B cell (primary cell): ENCODE measurements at regions of chr2 and their contacts with region 1.

Region 1: GRCh38 chr2:64914735-64915509 is 74.3 kb upstream of the SLC1A4 start:
- DNase-seq: peak; percentile 80
- ATAC-seq: peak; percentile 79
- H3K4me3 ChIP-seq: no peak overlapping the region
- H3K4me3 Mint-ChIP-seq: peak overlapping the region; percentile 62
- H3K27ac ChIP-seq: peak overlapping the region in 1 of 2 donors; percentile 58
- H3K27ac Mint-ChIP-seq: peak overlapping the region; percentile 66
- H3K4me1 ChIP-seq: peaks cover 57 to 68% of the 10 kb centered on the region in 2 donors
- H3K4me1 Mint-ChIP-seq: peaks cover 59% of the 10 kb centered on the region
- H3K27me3 ChIP-seq: no peaks in the 10 kb centered on the region
- H3K27me3 Mint-ChIP-seq: no peaks in the 10 kb centered on the region
- CTCF ChIP-seq: no peak

Region 2: GRCh38 chr2:64426183-64426952 is 488.6 kb before region 1 on chr2:
- CTCF ChIA-PET with region 1: no interaction called
- POLR2A ChIA-PET with region 1: no interaction called
- intact Hi-C with region 1: no loop called
- DNase-seq: no peak
- ATAC-seq: no peak
- H3K4me3 ChIP-seq: no peak overlapping the region
- H3K4me3 Mint-ChIP-seq: no peak overlapping the region
- H3K27ac ChIP-seq: no peak overlapping the region
- H3K27ac Mint-ChIP-seq: no peak overlapping the region
- H3K4me1 ChIP-seq: no peaks in the 10 kb centered on the region
- H3K4me1 Mint-ChIP-seq: no peaks in the 10 kb centered on the region
- H3K27me3 ChIP-seq: no peaks in the 10 kb centered on the region
- H3K27me3 Mint-ChIP-seq: peaks cover 4% of the 10 kb centered on the region
- CTCF ChIP-seq: no peak

Region 3: DNA sequence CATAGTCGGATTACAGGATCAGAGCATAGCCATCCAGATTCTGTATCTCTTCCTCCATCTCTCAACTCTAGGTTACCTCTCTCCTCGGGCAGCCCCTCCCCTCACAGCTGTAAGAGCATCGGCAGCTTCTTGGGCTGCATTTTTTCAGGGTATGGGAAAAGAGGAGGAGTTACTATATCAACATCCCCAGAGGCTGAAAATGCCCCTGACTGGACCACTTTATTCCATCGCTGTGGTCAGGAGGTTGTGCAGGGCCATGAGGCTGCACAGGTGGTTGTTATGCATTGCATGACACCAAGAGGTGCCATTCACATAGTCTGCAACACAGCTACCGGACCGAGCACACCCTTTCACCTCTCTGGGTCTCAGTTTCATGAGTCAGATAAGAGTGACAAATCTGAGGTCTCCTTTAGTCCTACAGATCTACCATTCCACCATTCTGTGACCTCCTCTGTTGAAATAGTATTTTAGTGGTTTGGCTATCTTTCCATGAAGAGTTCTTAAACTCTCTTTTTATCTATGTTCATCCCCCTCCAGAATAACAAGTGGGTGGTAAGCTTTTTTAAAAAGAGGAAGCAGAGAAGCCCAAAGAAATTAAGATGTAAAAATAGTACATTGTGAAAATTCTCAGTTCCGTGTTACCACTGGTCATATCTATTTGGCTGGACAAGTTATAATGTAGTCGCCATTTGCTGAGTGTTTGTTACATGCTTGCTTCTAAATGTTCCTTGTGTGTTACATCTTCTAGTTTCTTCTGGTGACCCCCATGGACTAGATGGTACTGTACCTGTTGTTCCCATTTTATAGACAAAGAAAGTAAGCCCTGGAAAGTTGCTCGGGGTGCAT is 17.7 kb after region 1 on chr2:
- CTCF ChIA-PET with region 1: interaction called, 70 read pairs
- POLR2A ChIA-PET with region 1: interaction called, 12 read pairs
- intact Hi-C with region 1: loop called (anchors 1 kb)
- DNase-seq: peak; percentile 68
- ATAC-seq: peak; percentile 75
- H3K4me3 ChIP-seq: peak overlapping the region; percentile 51 to 66 (median 59)
- H3K4me3 Mint-ChIP-seq: peak overlapping the region; percentile 83
- H3K27ac ChIP-seq: peak overlapping the region; percentile 74 to 87
- H3K27ac Mint-ChIP-seq: peak overlapping the region; percentile 83
- H3K4me1 ChIP-seq: peaks cover 92 to 95% of the 10 kb centered on the region in 2 donors
- H3K4me1 Mint-ChIP-seq: peaks cover 88% of the 10 kb centered on the region
- H3K27me3 ChIP-seq: no peaks in the 10 kb centered on the region
- H3K27me3 Mint-ChIP-seq: no peaks in the 10 kb centered on the region
- CTCF ChIP-seq: no peak

Region 4: DNA sequence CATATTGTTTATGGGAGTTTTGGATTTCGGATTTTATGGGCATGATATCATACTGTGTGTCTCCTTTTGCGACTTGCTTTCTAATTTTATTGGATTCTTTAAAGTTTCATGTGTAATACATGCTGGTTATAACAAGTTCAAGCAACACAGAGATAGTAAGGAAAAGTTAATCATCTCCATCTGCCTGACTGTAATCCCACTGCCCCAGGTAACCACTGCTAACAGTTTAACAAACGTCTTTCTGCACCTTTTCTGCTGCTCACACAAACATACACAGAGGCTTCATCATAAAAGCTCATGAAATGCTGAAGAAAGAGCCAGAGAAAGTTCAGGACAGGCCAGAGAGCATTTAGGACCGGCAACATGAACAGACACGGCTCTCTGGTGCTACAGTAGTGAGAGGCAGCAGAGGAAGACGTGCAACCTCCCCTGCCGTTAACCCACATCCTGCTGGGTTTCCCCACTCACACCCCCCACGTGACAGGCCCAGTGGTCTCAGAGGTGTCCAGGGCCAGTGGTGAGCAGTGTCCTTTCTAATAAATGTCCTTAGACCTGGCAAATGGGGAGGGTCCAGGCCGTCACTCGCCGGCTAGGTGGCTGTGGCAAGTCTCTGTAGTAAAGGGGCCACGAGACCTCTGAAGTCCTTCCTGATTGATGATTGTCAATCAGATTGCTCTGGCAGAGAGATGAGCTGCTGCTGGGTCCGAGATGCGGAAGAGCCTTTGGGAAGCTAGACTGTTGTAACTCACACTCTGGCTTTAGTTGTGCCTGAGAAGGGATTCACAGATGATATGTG is 31.2 kb after region 1 on chr2:
- CTCF ChIA-PET with region 1: interaction called, 10 read pairs
- POLR2A ChIA-PET with region 1: interaction called, 11 read pairs
- intact Hi-C with region 1: no loop called
- DNase-seq: peak; percentile 77
- ATAC-seq: peak; percentile 89
- H3K4me3 ChIP-seq: peak overlapping the region in 4 of 5 experiments; percentile 3 to 49 (median 19)
- H3K4me3 Mint-ChIP-seq: peak overlapping the region; percentile 82
- H3K27ac ChIP-seq: peak overlapping the region; percentile 87
- H3K27ac Mint-ChIP-seq: peak overlapping the region; percentile 94
- H3K4me1 ChIP-seq: peaks cover 38 to 43% of the 10 kb centered on the region in 2 donors
- H3K4me1 Mint-ChIP-seq: peaks cover 64% of the 10 kb centered on the region
- H3K27me3 ChIP-seq: no peaks in the 10 kb centered on the region
- H3K27me3 Mint-ChIP-seq: no peaks in the 10 kb centered on the region
- CTCF ChIP-seq: no peak

Region 5: GRCh38 chr2:65003037-65003436 is 88.1 kb after region 1 on chr2:
- CTCF ChIA-PET with region 1: interaction called, 11 read pairs
- POLR2A ChIA-PET with region 1: no interaction called
- intact Hi-C with region 1: no loop called
- DNase-seq: no peak
- ATAC-seq: no peak
- H3K4me3 ChIP-seq: no peak overlapping the region
- H3K4me3 Mint-ChIP-seq: no peak overlapping the region
- H3K27ac ChIP-seq: no peak overlapping the region
- H3K27ac Mint-ChIP-seq: no peak overlapping the region
- H3K4me1 ChIP-seq: no peaks in the 10 kb centered on the region
- H3K4me1 Mint-ChIP-seq: no peaks in the 10 kb centered on the region
- H3K27me3 ChIP-seq: no peaks in the 10 kb centered on the region
- H3K27me3 Mint-ChIP-seq: no peaks in the 10 kb centered on the region
- CTCF ChIP-seq: no peak

Region 6: DNA sequence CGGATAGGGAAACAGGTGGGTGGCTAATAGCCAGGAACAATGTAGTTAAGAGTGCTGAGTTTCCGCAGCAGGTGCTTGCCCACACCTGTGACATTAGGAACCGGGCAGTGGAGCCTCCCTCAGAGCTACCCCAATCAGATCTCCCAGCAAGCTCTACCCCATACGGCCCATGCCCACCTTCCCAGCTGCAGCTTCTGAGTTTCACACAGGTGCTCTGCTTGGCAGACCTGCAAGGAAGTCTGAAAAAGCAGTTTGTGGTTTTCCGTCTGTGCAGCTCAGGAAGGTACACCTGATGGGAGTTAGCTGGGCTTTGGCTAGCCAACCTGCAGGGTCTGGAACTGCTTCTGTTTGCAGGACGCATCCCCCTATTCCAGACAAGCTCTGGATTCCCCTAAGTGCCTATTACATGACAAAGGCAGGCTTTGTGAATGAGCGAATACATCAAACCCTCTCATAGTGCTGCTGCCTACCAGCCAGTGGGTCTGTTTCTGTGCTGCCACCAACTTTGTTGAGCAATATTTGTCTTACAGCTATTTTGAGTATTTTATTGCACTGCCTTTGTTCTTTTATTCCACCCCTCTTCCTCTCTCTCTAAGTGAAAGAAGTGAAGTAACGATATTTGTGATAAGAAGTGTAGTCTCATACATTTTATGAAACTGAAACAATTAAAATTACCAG is 116.6 kb after region 1 on chr2:
- CTCF ChIA-PET with region 1: interaction called, 360 read pairs
- POLR2A ChIA-PET with region 1: interaction called, 10 read pairs
- intact Hi-C with region 1: loop called (anchors 1 kb)
- DNase-seq: peak; percentile 68
- ATAC-seq: peak; percentile 12
- H3K4me3 ChIP-seq: peak overlapping the region; percentile 9 to 63 (median 44)
- H3K4me3 Mint-ChIP-seq: peak overlapping the region; percentile 89
- H3K27ac ChIP-seq: peak overlapping the region; percentile 67 to 87
- H3K27ac Mint-ChIP-seq: peak overlapping the region; percentile 87
- H3K4me1 ChIP-seq: peaks cover 60 to 71% of the 10 kb centered on the region in 2 donors
- H3K4me1 Mint-ChIP-seq: peaks cover 65% of the 10 kb centered on the region
- H3K27me3 ChIP-seq: no peaks in the 10 kb centered on the region
- H3K27me3 Mint-ChIP-seq: no peaks in the 10 kb centered on the region
- CTCF ChIP-seq: no peak

Region 7: GRCh38 chr2:65045651-65046050 is 130.7 kb after region 1 on chr2:
- CTCF ChIA-PET with region 1: interaction called, 360 read pairs
- POLR2A ChIA-PET with region 1: interaction called, 11 read pairs
- intact Hi-C with region 1: loop called (anchors 1 kb)
- DNase-seq: no peak
- ATAC-seq: no peak
- H3K4me3 ChIP-seq: no peak overlapping the region
- H3K4me3 Mint-ChIP-seq: no peak overlapping the region
- H3K27ac ChIP-seq: no peak overlapping the region
- H3K27ac Mint-ChIP-seq: no peak overlapping the region
- H3K4me1 ChIP-seq: peaks cover under 1% of the 10 kb centered on the region in 2 donors
- H3K4me1 Mint-ChIP-seq: peaks cover 12% of the 10 kb centered on the region
- H3K27me3 ChIP-seq: no peaks in the 10 kb centered on the region
- H3K27me3 Mint-ChIP-seq: no peaks in the 10 kb centered on the region
- CTCF ChIP-seq: no peak

Region 8: GRCh38 chr2:65120990-65121693 is 206.2 kb after region 1 on chr2:
- CTCF ChIA-PET with region 1: no interaction called
- POLR2A ChIA-PET with region 1: no interaction called
- intact Hi-C with region 1: no loop called
- DNase-seq: no peak
- ATAC-seq: no peak
- H3K4me3 ChIP-seq: no peak overlapping the region
- H3K4me3 Mint-ChIP-seq: no peak overlapping the region
- H3K27ac ChIP-seq: peak overlapping the region in 1 of 2 donors; percentile 30
- H3K27ac Mint-ChIP-seq: peak overlapping the region; percentile 38
- H3K4me1 ChIP-seq: peaks cover 14 to 30% of the 10 kb centered on the region in 2 donors
- H3K4me1 Mint-ChIP-seq: peaks cover 53% of the 10 kb centered on the region
- H3K27me3 ChIP-seq: no peaks in the 10 kb centered on the region
- H3K27me3 Mint-ChIP-seq: no peaks in the 10 kb centered on the region
- CTCF ChIP-seq: no peak

Region 9: DNA sequence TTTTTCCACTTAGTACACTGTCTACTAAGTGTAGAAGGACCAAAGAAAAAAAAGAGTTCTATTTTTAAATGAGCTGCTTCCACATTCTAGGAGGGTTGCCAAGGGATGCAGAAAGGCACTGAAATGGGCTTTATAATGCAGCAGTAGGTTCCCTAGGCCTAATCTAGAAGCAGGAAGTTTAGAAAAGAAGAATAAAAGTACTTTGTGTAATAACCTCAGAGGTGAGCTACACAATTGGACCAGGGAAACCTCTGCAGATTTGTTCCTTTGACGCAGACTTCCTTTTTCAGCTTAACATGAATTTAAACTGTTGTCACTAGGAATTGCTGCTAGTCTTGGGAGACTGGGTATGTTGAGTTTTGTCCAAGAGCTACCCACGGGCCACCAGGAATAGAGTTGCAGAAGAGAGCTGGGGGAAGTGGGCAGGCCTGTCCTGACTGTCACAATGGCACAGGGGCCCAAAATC is 249.5 kb after region 1 on chr2:
- CTCF ChIA-PET with region 1: interaction called, 7 read pairs
- POLR2A ChIA-PET with region 1: interaction called, 3 read pairs
- intact Hi-C with region 1: loop called (anchors 5 kb)
- DNase-seq: no peak
- ATAC-seq: no peak
- H3K4me3 ChIP-seq: no peak overlapping the region
- H3K4me3 Mint-ChIP-seq: no peak overlapping the region
- H3K27ac ChIP-seq: no peak overlapping the region
- H3K27ac Mint-ChIP-seq: no peak overlapping the region
- H3K4me1 ChIP-seq: peaks cover 14 to 30% of the 10 kb centered on the region in 2 donors
- H3K4me1 Mint-ChIP-seq: peaks cover 34% of the 10 kb centered on the region
- H3K27me3 ChIP-seq: no peaks in the 10 kb centered on the region
- H3K27me3 Mint-ChIP-seq: no peaks in the 10 kb centered on the region
- CTCF ChIP-seq: no peak